CD8-positive, alpha-beta T cell (primary cell): ENCODE measurements at regions of chr3 and their contacts with region 1.

Region 1: DNA sequence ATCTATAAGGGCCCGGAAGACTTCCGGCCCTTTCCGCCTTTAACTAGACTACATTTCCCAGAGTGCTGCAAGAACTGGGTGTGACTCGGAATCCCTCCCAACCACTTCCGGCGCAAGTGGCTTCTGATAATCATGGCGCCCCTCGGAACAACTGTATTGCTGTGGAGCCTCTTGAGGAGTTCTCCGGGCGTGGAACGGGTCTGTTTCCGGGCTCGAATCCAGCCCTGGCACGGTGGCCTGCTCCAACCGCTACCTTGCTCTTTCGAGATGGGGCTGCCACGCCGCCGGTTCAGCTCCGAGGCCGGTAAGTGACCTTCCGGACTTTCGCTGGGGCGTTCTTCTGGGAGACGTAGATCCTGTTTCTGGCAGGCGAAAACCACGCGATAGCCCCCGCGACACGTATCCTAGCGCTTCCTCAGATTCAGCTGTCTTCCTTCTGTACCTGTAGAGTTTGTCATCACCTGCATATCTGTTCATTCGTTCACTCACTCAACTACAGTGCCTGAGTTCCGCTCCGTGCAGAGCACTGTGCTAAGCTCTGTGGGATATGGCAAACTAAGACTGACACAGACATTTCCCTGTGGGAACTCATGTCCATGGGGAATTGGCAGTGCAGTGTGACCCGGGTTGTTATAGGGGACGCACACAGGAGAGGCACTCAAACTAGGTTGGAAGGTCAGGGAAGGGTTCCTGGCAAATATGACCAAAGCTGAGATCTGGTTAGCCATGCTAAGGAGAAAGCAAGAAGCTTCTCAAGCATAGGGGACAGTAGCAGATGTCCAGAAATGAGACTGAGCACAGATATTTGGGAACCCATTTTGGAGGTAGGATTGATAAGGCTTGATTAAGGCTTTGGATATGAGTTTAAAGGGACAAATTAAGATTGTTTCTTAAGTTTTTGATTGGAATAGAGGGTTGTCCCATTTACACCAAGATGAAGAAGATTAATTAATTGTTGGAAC is at the start of gene MRPS22:
- DNase-seq: peak; percentile 58 to 92 (median 84)
- ATAC-seq: peak; percentile 97
- H3K4me3 ChIP-seq: peak within 1 kb of the TSS; percentile 84 to 99
- H3K4me3 Mint-ChIP-seq: peak within 1 kb of the TSS; percentile 72
- H3K27ac ChIP-seq: peak within 1 kb of the TSS; percentile 70 to 92
- H3K27ac Mint-ChIP-seq: peak within 1 kb of the TSS; percentile 86
- H3K4me1 ChIP-seq: peaks cover 15% of the 10 kb centered on the region
- H3K4me1 Mint-ChIP-seq: peaks cover 11% of the 10 kb centered on the region
- H3K27me3 ChIP-seq: no peaks in the 10 kb centered on the region
- H3K27me3 Mint-ChIP-seq: peaks cover 5% of the 10 kb centered on the region
- CTCF ChIP-seq: no peak
- total RNA-seq, gene MRPS22: 55.4 to 57.6 TPM

Region 2: GRCh38 chr3:138174421-138175122 is 1169.6 kb before region 1 on chr3 and contains the start of gene DBR1:
- CTCF ChIA-PET with region 1: no interaction called
- POLR2A ChIA-PET with region 1: no interaction called
- intact Hi-C with region 1: loop called (anchors 5 to 10 kb)
- DNase-seq: peak; percentile 51 to 89 (median 74)
- ATAC-seq: peak; percentile 87
- H3K4me3 ChIP-seq: peak within 1 kb of the TSS; percentile 76
- H3K4me3 Mint-ChIP-seq: peak within 1 kb of the TSS; percentile 99
- H3K27ac ChIP-seq: peak within 1 kb of the TSS; percentile 71 to 79
- H3K27ac Mint-ChIP-seq: peak within 1 kb of the TSS; percentile 98
- H3K4me1 ChIP-seq: peaks cover 21% of the 10 kb centered on the region
- H3K4me1 Mint-ChIP-seq: peaks cover 40% of the 10 kb centered on the region
- H3K27me3 ChIP-seq: no peaks in the 10 kb centered on the region
- H3K27me3 Mint-ChIP-seq: no peaks in the 10 kb centered on the region
- CTCF ChIP-seq: no peak
- total RNA-seq, gene DBR1: 31.2 to 31.9 TPM

Region 3: DNA sequence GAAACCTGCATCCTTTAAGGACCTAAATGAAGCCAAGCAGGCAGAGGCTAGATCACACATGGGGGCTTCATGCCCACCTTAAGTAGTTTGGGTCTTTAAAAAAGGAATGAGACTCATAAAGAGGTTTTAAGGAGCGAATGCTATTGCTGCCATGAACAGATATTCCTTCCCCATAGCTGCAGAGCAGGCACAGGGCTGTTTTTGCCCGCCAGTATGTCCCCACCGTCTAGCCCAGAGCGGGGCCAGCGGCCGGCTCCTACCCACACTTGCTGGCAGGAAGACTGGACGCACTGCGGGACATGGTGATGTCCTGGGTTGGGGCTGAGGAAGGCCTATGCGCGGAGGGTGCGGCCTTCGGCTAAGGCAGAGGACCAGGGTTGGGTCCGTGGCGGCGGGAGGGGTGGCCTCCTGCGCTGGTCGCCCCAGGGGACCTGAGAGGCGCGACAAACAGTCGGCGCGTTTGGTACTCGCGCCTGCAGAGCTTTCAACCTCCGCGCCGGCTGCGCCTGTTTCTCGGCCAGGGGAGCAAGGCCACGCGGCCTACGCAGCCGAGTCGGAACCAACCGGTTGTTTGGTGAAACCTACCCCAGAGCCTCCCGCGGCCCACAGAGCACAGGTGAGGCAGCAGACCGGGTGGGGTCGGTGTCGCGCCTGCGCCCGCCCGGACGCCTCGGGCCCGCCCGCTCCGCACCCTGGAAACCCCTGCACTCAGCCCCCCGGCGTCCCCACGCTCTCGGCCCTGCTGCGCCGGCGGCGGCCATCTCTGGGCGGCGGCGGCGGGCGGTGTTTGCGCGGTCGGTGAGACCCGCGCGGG is 735.6 kb before region 1 on chr3 and contains the start of gene FAIM:
- CTCF ChIA-PET with region 1: no interaction called
- POLR2A ChIA-PET with region 1: no interaction called
- intact Hi-C with region 1: loop called in 1 of 2 experiments (anchors 5 kb)
- DNase-seq: peak; percentile 52 to 84 (median 70)
- ATAC-seq: peak; percentile 76
- H3K4me3 ChIP-seq: peak within 1 kb of the TSS; percentile 71 to 83
- H3K4me3 Mint-ChIP-seq: peak within 1 kb of the TSS; percentile 86
- H3K27ac ChIP-seq: peak within 1 kb of the TSS; percentile 84 to 86
- H3K27ac Mint-ChIP-seq: peak within 1 kb of the TSS; percentile 96
- H3K4me1 ChIP-seq: peaks cover 14% of the 10 kb centered on the region
- H3K4me1 Mint-ChIP-seq: peaks cover 15% of the 10 kb centered on the region
- H3K27me3 ChIP-seq: no peaks in the 10 kb centered on the region
- H3K27me3 Mint-ChIP-seq: no peaks in the 10 kb centered on the region
- CTCF ChIP-seq: no peak
- total RNA-seq, gene FAIM: 2.0 to 2.6 TPM

Region 4: DNA sequence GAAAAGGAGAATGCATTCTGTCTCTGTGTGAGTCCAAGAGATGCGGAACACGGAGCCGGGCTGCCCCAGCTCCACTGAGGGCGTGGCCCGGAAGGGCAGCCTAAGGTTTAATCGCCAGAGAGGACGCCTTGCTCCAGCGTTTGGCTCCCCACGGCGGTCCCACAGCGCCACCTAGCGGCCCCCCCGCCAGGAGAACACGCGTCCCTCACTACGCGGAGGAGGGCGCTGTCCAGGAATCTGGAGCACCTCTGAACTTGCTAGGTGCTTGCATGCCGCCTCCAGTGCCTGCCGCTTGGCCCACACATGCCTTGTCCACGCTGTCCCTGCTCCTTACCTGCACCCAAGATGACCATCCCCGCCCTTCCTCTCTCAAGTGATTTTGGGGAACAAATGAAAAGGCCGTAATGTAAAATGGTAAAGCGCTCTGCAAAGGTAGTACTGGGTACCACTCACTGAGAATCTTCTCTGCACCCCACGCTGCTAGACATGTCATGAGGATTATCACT is 14.8 kb before region 1 on chr3:
- CTCF ChIA-PET with region 1: interaction called, 34 read pairs
- POLR2A ChIA-PET with region 1: no interaction called
- intact Hi-C with region 1: no loop called
- DNase-seq: peak; percentile 68 to 92 (median 85)
- ATAC-seq: peak; percentile 96
- H3K4me3 ChIP-seq: peak overlapping the region; percentile 21 to 36
- H3K4me3 Mint-ChIP-seq: peak overlapping the region; percentile 69
- H3K27ac ChIP-seq: no peak overlapping the region
- H3K27ac Mint-ChIP-seq: no peak overlapping the region
- H3K4me1 ChIP-seq: peaks cover 9% of the 10 kb centered on the region
- H3K4me1 Mint-ChIP-seq: peaks cover 17% of the 10 kb centered on the region
- H3K27me3 ChIP-seq: peaks cover 3 to 4% of the 10 kb centered on the region in 2 experiments
- H3K27me3 Mint-ChIP-seq: peaks cover 34% of the 10 kb centered on the region
- CTCF ChIP-seq: peak; percentile 95

Region 5: GRCh38 chr3:139389458-139390209 is 45.5 kb after region 1 on chr3 and contains the start of gene COPB2:
- CTCF ChIA-PET with region 1: no interaction called
- POLR2A ChIA-PET with region 1: interaction called, 4 read pairs
- intact Hi-C with region 1: loop called (anchors 1 kb)
- DNase-seq: peak; percentile 92 to 98 (median 96)
- ATAC-seq: peak; percentile 85
- H3K4me3 ChIP-seq: peak within 1 kb of the TSS; percentile 72 to 94
- H3K4me3 Mint-ChIP-seq: peak within 1 kb of the TSS; percentile 100
- H3K27ac ChIP-seq: peak within 1 kb of the TSS; percentile 92 to 95
- H3K27ac Mint-ChIP-seq: peak within 1 kb of the TSS; percentile 99
- H3K4me1 ChIP-seq: peaks cover 18% of the 10 kb centered on the region
- H3K4me1 Mint-ChIP-seq: peaks cover 54% of the 10 kb centered on the region
- H3K27me3 ChIP-seq: no peaks in the 10 kb centered on the region
- H3K27me3 Mint-ChIP-seq: no peaks in the 10 kb centered on the region
- CTCF ChIP-seq: no peak
- total RNA-seq, gene COPB2: 12.8 to 16.4 TPM

Region 6: GRCh38 chr3:139677388-139678155 is 333.4 kb after region 1 on chr3 and contains the start of gene NMNAT3:
- CTCF ChIA-PET with region 1: no interaction called
- POLR2A ChIA-PET with region 1: no interaction called
- intact Hi-C with region 1: loop called (anchors 2 to 5 kb)
- DNase-seq: peak; percentile 62 to 87 (median 80)
- ATAC-seq: peak; percentile 99
- H3K4me3 ChIP-seq: peak within 1 kb of the TSS; percentile 89 to 100
- H3K4me3 Mint-ChIP-seq: peak within 1 kb of the TSS; percentile 83
- H3K27ac ChIP-seq: peak within 1 kb of the TSS; percentile 70 to 71
- H3K27ac Mint-ChIP-seq: peak within 1 kb of the TSS; percentile 53
- H3K4me1 ChIP-seq: peaks cover 6% of the 10 kb centered on the region
- H3K4me1 Mint-ChIP-seq: peaks cover 10% of the 10 kb centered on the region
- H3K27me3 ChIP-seq: no peaks in the 10 kb centered on the region
- H3K27me3 Mint-ChIP-seq: no peaks in the 10 kb centered on the region
- CTCF ChIP-seq: no peak
- total RNA-seq, gene NMNAT3: 0.81 to 1.2 TPM

Region 7: DNA sequence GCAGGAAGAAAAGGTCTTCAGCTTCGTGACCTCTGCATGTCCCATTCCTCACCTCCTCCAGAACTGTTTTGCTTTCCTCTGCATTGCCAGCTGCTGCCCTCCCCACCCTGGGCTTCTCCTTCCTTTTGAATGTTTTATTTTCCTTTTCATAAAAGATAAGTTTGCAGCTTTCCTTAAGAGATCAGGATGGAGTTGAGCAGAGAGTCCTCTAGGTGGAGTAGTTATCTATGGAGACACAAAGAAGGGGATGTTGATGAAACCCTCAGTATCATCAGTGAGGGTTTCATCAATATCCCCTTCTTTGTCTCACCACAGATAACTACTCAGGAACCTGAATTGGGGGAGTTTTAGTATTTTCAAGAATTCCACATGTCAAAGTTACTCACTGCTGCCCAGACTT is 1578.5 kb after region 1 on chr3:
- CTCF ChIA-PET with region 1: no interaction called
- POLR2A ChIA-PET with region 1: no interaction called
- intact Hi-C with region 1: no loop called
- DNase-seq: peak in 2 of 9 experiments; percentile 26 to 43
- ATAC-seq: peak; percentile 55
- H3K4me3 ChIP-seq: no peak overlapping the region
- H3K4me3 Mint-ChIP-seq: no peak overlapping the region
- H3K27ac ChIP-seq: no peak overlapping the region
- H3K27ac Mint-ChIP-seq: no peak overlapping the region
- H3K4me1 ChIP-seq: no peaks in the 10 kb centered on the region
- H3K4me1 Mint-ChIP-seq: no peaks in the 10 kb centered on the region
- H3K27me3 ChIP-seq: peaks cover 0 to 2% of the 10 kb centered on the region in 2 experiments
- H3K27me3 Mint-ChIP-seq: peaks cover 9% of the 10 kb centered on the region
- CTCF ChIP-seq: peak; percentile 44

Region 8: GRCh38 chr3:140941434-140942220 is 1597.5 kb after region 1 on chr3 and contains the start of gene SLC25A36:
- CTCF ChIA-PET with region 1: no interaction called
- POLR2A ChIA-PET with region 1: no interaction called
- intact Hi-C with region 1: loop called in 1 of 2 experiments (anchors 5 kb)
- DNase-seq: peak; percentile 90 to 100 (median 96)
- ATAC-seq: peak; percentile 96
- H3K4me3 ChIP-seq: peak within 1 kb of the TSS; percentile 71 to 78
- H3K4me3 Mint-ChIP-seq: peak within 1 kb of the TSS; percentile 90
- H3K27ac ChIP-seq: peak within 1 kb of the TSS; percentile 85 to 88
- H3K27ac Mint-ChIP-seq: peak within 1 kb of the TSS; percentile 99
- H3K4me1 ChIP-seq: peaks cover 14% of the 10 kb centered on the region
- H3K4me1 Mint-ChIP-seq: peaks cover 36% of the 10 kb centered on the region
- H3K27me3 ChIP-seq: no peaks in the 10 kb centered on the region
- H3K27me3 Mint-ChIP-seq: no peaks in the 10 kb centered on the region
- CTCF ChIP-seq: no peak
- total RNA-seq, gene SLC25A36: 156 to 165 TPM